ENCODE measurements at regions of chr6 and their contacts with region 1.

Region 1: DNA sequence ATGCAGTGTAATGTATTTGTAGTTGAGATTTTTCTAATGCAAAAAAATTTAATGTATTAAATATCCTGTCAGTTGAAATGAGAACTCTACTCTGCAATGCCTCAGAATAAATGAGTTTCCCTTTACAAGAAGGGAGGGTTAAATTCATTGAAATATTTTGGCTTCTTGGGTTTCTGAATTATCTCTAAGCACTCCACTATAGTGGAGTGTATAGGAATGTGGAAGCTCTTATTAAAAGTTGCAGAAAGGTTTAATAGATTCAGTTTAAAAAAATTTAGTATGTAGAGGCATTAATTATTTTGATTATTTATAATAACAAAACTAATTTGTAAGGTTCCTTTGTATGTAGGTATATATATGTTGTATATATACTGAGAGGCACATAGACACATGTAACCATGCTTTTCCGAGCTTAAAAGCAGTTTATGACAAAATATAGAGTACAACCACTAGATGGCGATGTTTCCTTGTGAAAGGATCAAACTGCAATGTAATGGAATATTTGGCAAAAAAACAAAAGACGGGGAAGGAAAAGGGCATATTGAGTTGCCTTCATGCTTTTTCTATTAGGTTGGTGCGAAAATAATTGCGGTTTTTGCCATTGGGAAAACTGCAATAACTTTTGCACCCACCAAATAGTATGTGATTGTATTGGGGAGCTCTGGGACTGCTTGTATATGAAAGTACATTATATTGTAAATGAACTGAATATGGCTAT is 144.2 kb downstream of the MYO6 start:
- DNase-seq: no peak
- ATAC-seq: peak; percentile 64
- H3K4me3 Mint-ChIP-seq: no peak overlapping the region
- H3K27ac Mint-ChIP-seq: 0 out of 2 replicates have a peak overlapping the region, but pooled peaks have one; percentile 7
- H3K4me1 Mint-ChIP-seq: peaks cover 3% of the 10 kb centered on the region; the same call in 1 of the 2 replicates
- H3K27me3 Mint-ChIP-seq: no peaks in the 10 kb centered on the region
- CTCF ChIP-seq: peak; percentile 75

Region 2: DNA sequence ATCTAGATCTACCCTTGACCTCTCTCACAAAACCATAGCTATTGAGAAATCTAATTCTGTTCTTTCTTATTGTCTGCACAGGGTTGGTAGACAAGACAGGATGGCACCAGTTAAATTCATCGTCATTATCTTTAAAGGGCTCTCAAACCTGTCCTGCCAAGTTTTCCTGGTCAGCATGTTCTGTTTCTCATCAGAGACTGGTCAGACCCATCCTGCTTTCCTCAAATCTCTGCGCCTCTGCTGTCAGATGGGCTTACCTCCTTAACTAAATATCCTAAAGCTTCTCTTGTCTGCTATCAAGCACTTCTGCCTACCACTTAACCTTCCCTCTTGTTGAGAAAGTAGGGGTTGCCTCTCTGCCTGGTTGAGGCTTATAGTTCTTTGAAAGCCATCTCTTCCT is 19.0 kb before region 1 on chr6:
- CTCF ChIA-PET with region 1: interaction called, 23 read pairs
- POLR2A ChIA-PET with region 1: no interaction called
- DNase-seq: no peak
- ATAC-seq: no peak
- H3K4me3 Mint-ChIP-seq: no peak overlapping the region
- H3K27ac Mint-ChIP-seq: 0 out of 2 replicates have a peak overlapping the region, but pooled peaks have one; percentile 23
- H3K4me1 Mint-ChIP-seq: peaks cover 9% of the 10 kb centered on the region
- H3K27me3 Mint-ChIP-seq: no peaks in the 10 kb centered on the region
- CTCF ChIP-seq: no peak

Region 3: GRCh38 chr6:75880305-75880704 is 12.9 kb before region 1 on chr6:
- CTCF ChIA-PET with region 1: interaction called, 23 read pairs
- POLR2A ChIA-PET with region 1: no interaction called
- DNase-seq: no peak
- ATAC-seq: no peak
- H3K4me3 Mint-ChIP-seq: no peak overlapping the region
- H3K27ac Mint-ChIP-seq: no peak overlapping the region
- H3K4me1 Mint-ChIP-seq: peaks cover 11% of the 10 kb centered on the region
- H3K27me3 Mint-ChIP-seq: no peaks in the 10 kb centered on the region
- CTCF ChIP-seq: no peak

Region 4: DNA sequence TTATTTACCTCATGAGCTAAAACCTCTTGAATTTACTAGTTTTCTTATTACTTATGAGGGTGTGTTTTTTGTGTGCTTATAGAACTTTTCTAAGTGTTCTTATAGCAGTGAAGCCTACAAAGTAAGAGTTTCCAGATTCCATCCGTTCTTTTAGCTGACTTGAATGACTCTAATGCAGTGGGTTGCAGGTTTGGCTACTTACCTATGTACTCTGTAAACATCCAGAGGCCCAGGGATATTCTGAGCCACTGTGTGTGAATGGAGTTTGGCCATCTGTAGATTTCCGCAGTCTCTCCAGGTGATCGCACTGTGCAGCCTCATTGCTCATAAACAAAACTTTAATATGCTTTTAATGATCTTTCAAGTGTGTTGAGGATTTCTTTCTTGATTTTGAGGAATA is 13.7 kb after region 1 on chr6:
- CTCF ChIA-PET with region 1: interaction called, 12 read pairs
- POLR2A ChIA-PET with region 1: no interaction called
- DNase-seq: no peak
- ATAC-seq: no peak
- H3K4me3 Mint-ChIP-seq: no peak overlapping the region
- H3K27ac Mint-ChIP-seq: no peak overlapping the region
- H3K4me1 Mint-ChIP-seq: peaks cover 3% of the 10 kb centered on the region; the same call in 1 of the 2 replicates
- H3K27me3 Mint-ChIP-seq: no peaks in the 10 kb centered on the region
- CTCF ChIP-seq: no peak

Region 5: GRCh38 chr6:75926293-75927168 is 33.3 kb after region 1 on chr6:
- CTCF ChIA-PET with region 1: interaction called, 22 read pairs
- POLR2A ChIA-PET with region 1: interaction called, 3 read pairs
- DNase-seq: no peak
- ATAC-seq: no peak
- H3K4me3 Mint-ChIP-seq: no peak overlapping the region
- H3K27ac Mint-ChIP-seq: no peak overlapping the region
- H3K4me1 Mint-ChIP-seq: no peaks in the 10 kb centered on the region
- H3K27me3 Mint-ChIP-seq: no peaks in the 10 kb centered on the region; the same call in 1 of the 2 replicates
- CTCF ChIP-seq: no peak

Region 6: GRCh38 chr6:75934643-75935472 is 41.6 kb after region 1 on chr6:
- CTCF ChIA-PET with region 1: interaction called, 34 read pairs
- POLR2A ChIA-PET with region 1: interaction called, 3 read pairs
- DNase-seq: peak; percentile 46
- ATAC-seq: peak; percentile 75
- H3K4me3 Mint-ChIP-seq: peak overlapping the region; percentile 66
- H3K27ac Mint-ChIP-seq: peak overlapping the region; percentile 67; the same call in 1 of the 2 replicates
- H3K4me1 Mint-ChIP-seq: peaks cover 11% of the 10 kb centered on the region
- H3K27me3 Mint-ChIP-seq: peaks cover 71% of the 10 kb centered on the region
- CTCF ChIP-seq: peak; percentile 70

Region 7: GRCh38 chr6:76861403-76861802 is 968.2 kb after region 1 on chr6:
- CTCF ChIA-PET with region 1: interaction called, 10 read pairs
- POLR2A ChIA-PET with region 1: no interaction called
- DNase-seq: peak; percentile 64
- ATAC-seq: peak; percentile 99
- H3K4me3 Mint-ChIP-seq: no peak overlapping the region
- H3K27ac Mint-ChIP-seq: no peak overlapping the region
- H3K4me1 Mint-ChIP-seq: peaks cover 4% of the 10 kb centered on the region
- H3K27me3 Mint-ChIP-seq: peaks cover under 1% of the 10 kb centered on the region; the same call in 1 of the 2 replicates
- CTCF ChIP-seq: peak; percentile 37; the same call in 1 of the 2 replicates